B cell (primary cell): ENCODE measurements at regions of chr12 and their contacts with region 1.

Region 1: DNA sequence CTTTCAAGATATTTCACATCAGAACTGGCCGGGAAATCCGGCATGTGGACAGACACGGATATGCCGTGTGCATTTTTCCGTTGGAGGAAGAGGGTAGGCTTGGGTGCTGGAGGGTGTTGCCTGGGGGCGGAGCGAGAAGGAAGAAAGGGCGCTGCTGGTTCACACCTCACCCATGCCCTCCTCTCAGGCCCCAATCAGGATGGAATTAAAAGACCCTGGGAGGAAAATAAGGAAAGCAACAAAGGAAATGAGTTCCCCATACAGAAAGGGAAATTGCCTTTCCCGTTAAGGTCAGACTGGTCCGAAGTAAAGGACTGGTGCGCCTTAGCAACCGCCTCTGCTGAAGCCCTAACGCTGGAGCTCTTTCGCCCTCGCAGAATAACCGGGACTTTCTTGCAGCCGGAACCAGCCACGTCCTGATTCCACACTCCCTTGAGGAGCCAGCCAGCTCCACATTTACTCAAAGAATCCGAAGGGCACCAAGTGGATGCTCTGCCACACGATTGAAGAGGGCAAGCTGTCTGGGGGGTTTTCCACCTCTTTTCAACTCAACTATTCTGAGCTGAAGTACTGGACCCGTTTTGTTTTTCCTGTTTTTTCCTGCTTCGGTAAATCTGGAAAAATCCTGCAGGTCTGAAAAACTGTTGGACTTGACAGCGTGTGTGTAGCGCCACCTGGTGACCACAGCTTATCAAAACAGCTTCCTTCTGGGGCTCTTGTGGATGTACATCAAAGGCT is 37.7 kb upstream of the BCL2L14 start:
- DNase-seq: peak; percentile 78
- ATAC-seq: peak; percentile 70
- H3K4me3 ChIP-seq: peak overlapping the region; percentile 21 to 76 (median 48)
- H3K4me3 Mint-ChIP-seq: peak overlapping the region; percentile 75
- H3K27ac ChIP-seq: no peak overlapping the region
- H3K27ac Mint-ChIP-seq: no peak overlapping the region
- H3K4me1 ChIP-seq: peaks cover 12 to 15% of the 10 kb centered on the region in 2 donors
- H3K4me1 Mint-ChIP-seq: peaks cover 13% of the 10 kb centered on the region
- H3K27me3 ChIP-seq: no peaks in the 10 kb centered on the region
- H3K27me3 Mint-ChIP-seq: peaks cover 4% of the 10 kb centered on the region
- CTCF ChIP-seq: peak; percentile 87

Region 2: GRCh38 chr12:11581179-11581755 is 451.8 kb before region 1 on chr12:
- CTCF ChIA-PET with region 1: interaction called, 433 read pairs
- POLR2A ChIA-PET with region 1: no interaction called
- intact Hi-C with region 1: loop called (anchors 1 kb)
- DNase-seq: peak; percentile 78
- ATAC-seq: no peak
- H3K4me3 ChIP-seq: no peak overlapping the region
- H3K4me3 Mint-ChIP-seq: no peak overlapping the region
- H3K27ac ChIP-seq: no peak overlapping the region
- H3K27ac Mint-ChIP-seq: no peak overlapping the region
- H3K4me1 ChIP-seq: peaks cover 5 to 11% of the 10 kb centered on the region in 2 donors
- H3K4me1 Mint-ChIP-seq: peaks cover 7% of the 10 kb centered on the region
- H3K27me3 ChIP-seq: no peaks in the 10 kb centered on the region
- H3K27me3 Mint-ChIP-seq: peaks cover 15% of the 10 kb centered on the region
- CTCF ChIP-seq: peak; percentile 86

Region 3: GRCh38 chr12:11621797-11622423 is 411.1 kb before region 1 on chr12:
- CTCF ChIA-PET with region 1: interaction called, 90 read pairs
- POLR2A ChIA-PET with region 1: no interaction called
- intact Hi-C with region 1: loop called (anchors 1 kb)
- DNase-seq: peak; percentile 59
- ATAC-seq: peak; percentile 43
- H3K4me3 ChIP-seq: no peak overlapping the region
- H3K4me3 Mint-ChIP-seq: no peak overlapping the region
- H3K27ac ChIP-seq: no peak overlapping the region
- H3K27ac Mint-ChIP-seq: peak overlapping the region; percentile 23
- H3K4me1 ChIP-seq: no peaks in the 10 kb centered on the region
- H3K4me1 Mint-ChIP-seq: peaks cover 3% of the 10 kb centered on the region
- H3K27me3 ChIP-seq: no peaks in the 10 kb centered on the region
- H3K27me3 Mint-ChIP-seq: no peaks in the 10 kb centered on the region
- CTCF ChIP-seq: peak; percentile 20

Region 4: GRCh38 chr12:11730299-11731041 is 302.6 kb before region 1 on chr12:
- CTCF ChIA-PET with region 1: interaction called, 7 read pairs
- POLR2A ChIA-PET with region 1: no interaction called
- intact Hi-C with region 1: loop called (anchors 5 kb)
- DNase-seq: peak; percentile 83
- ATAC-seq: peak; percentile 80
- H3K4me3 ChIP-seq: no peak overlapping the region
- H3K4me3 Mint-ChIP-seq: peak overlapping the region; percentile 79
- H3K27ac ChIP-seq: peak overlapping the region; percentile 69 to 76
- H3K27ac Mint-ChIP-seq: peak overlapping the region; percentile 94
- H3K4me1 ChIP-seq: peaks cover 82 to 94% of the 10 kb centered on the region in 2 donors
- H3K4me1 Mint-ChIP-seq: peaks cover 92% of the 10 kb centered on the region
- H3K27me3 ChIP-seq: no peaks in the 10 kb centered on the region
- H3K27me3 Mint-ChIP-seq: no peaks in the 10 kb centered on the region
- CTCF ChIP-seq: no peak

Region 5: DNA sequence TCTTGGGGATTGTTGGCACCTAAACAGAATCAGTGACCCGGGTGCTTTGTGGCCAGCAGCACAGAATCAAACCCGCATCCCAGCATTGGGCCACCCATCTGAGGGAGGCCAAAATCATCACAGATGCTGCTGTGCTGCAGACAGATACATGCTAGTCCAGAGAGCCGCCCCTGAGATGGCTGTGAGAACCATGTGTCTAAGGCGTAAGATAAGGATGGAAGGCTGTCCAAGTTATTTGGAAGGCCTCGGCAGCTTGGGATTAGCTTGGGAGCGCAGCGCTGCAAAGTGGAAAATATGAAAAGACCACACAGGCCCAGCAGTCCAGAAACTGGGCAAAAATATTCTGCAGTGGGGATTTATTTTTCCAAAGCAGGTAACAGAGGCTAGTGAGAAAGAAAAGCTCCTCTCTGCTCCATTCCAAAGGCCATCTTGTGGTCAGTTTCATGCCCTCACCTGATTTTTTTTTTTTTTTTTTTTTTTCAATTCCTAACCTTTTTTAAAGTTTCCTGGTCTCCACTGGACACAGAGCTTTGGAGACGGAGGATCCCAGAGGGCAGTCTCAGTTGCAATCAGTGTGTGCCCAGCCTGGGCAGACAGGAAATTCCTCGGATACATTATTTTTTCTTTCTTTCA is 141.2 kb before region 1 on chr12:
- CTCF ChIA-PET with region 1: interaction called, 5 read pairs
- POLR2A ChIA-PET with region 1: interaction called, 4 read pairs
- intact Hi-C with region 1: loop called (anchors 10 kb)
- DNase-seq: no peak
- ATAC-seq: no peak
- H3K4me3 ChIP-seq: no peak overlapping the region
- H3K4me3 Mint-ChIP-seq: peak overlapping the region; percentile 27
- H3K27ac ChIP-seq: no peak overlapping the region
- H3K27ac Mint-ChIP-seq: no peak overlapping the region
- H3K4me1 ChIP-seq: peaks cover 16 to 23% of the 10 kb centered on the region in 2 donors
- H3K4me1 Mint-ChIP-seq: peaks cover 42% of the 10 kb centered on the region
- H3K27me3 ChIP-seq: no peaks in the 10 kb centered on the region
- H3K27me3 Mint-ChIP-seq: no peaks in the 10 kb centered on the region
- CTCF ChIP-seq: no peak

Region 6: GRCh38 chr12:11941606-11942337 is 91.2 kb before region 1 on chr12:
- CTCF ChIA-PET with region 1: no interaction called
- POLR2A ChIA-PET with region 1: no interaction called
- intact Hi-C with region 1: no loop called
- DNase-seq: no peak
- ATAC-seq: no peak
- H3K4me3 ChIP-seq: no peak overlapping the region
- H3K4me3 Mint-ChIP-seq: no peak overlapping the region
- H3K27ac ChIP-seq: no peak overlapping the region
- H3K27ac Mint-ChIP-seq: no peak overlapping the region
- H3K4me1 ChIP-seq: no peaks in the 10 kb centered on the region
- H3K4me1 Mint-ChIP-seq: no peaks in the 10 kb centered on the region
- H3K27me3 ChIP-seq: no peaks in the 10 kb centered on the region
- H3K27me3 Mint-ChIP-seq: peaks cover 6% of the 10 kb centered on the region
- CTCF ChIP-seq: no peak

Region 7: GRCh38 chr12:12327802-12328201 is 294.8 kb after region 1 on chr12:
- CTCF ChIA-PET with region 1: interaction called, 13 read pairs
- POLR2A ChIA-PET with region 1: no interaction called
- intact Hi-C with region 1: loop called (anchors 5 kb)
- DNase-seq: peak; percentile 63
- ATAC-seq: peak; percentile 47
- H3K4me3 ChIP-seq: no peak overlapping the region
- H3K4me3 Mint-ChIP-seq: no peak overlapping the region
- H3K27ac ChIP-seq: no peak overlapping the region
- H3K27ac Mint-ChIP-seq: no peak overlapping the region
- H3K4me1 ChIP-seq: no peaks in the 10 kb centered on the region
- H3K4me1 Mint-ChIP-seq: peaks cover 2% of the 10 kb centered on the region
- H3K27me3 ChIP-seq: no peaks in the 10 kb centered on the region
- H3K27me3 Mint-ChIP-seq: peaks cover 25% of the 10 kb centered on the region
- CTCF ChIP-seq: peak; percentile 77